ENCODE measurements at regions of chr1 and their contacts with region 1.

Region 1: GRCh38 chr1:7902478-7903085 is 38.1 kb downstream of the TNFRSF9 start:
- DNase-seq: peak in 1 of 2 donors; percentile 76
- H3K4me3 ChIP-seq: peak overlapping the region; percentile 29 to 40
- H3K27ac ChIP-seq: no peak overlapping the region
- H3K4me1 ChIP-seq: peaks cover 0 to 10% of the 10 kb centered on the region in 2 donors
- H3K27me3 ChIP-seq: no peaks in the 10 kb centered on the region
- CTCF ChIP-seq: peak; percentile 66 to 76 (median 69)

Region 2: GRCh38 chr1:7667625-7668218 is 234.9 kb before region 1 on chr1:
- intact Hi-C with region 1: loop called (anchors 1 kb)
- DNase-seq: peak; percentile 61 to 95
- H3K4me3 ChIP-seq: no peak overlapping the region
- H3K27ac ChIP-seq: no peak overlapping the region
- H3K4me1 ChIP-seq: no peaks in the 10 kb centered on the region
- H3K27me3 ChIP-seq: no peaks in the 10 kb centered on the region
- CTCF ChIP-seq: peak; percentile 99 to 100 (median 100)

Region 3: DNA sequence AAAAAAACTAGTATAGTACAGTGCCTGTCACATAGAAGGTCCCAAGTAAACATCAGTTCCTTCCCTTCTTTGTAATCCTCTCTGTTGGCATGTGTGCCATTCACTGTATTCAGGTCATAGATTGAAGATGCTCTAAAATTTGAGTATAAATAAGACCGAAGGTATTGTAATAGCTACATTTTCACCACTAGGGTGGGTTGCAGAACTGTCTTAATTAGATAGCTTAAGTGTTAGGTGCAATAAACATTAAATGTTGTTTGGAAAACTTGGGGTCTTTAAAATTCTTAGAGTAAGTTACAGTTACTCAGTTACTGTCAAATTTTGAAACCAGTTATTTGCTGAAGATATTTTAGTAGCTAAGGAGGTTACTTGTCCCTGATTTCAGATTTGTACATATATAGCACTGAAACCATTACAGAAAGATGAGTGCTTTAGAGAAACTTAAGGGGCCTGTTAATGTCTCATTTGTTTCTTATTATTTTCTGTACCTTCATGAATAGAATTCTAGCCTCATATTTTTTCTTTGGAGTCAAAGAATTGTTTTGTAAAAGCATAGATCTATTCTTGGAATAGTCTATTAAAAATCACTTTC is 94.2 kb before region 1 on chr1:
- intact Hi-C with region 1: loop called (anchors 2 kb)
- DNase-seq: no peak
- H3K4me3 ChIP-seq: no peak overlapping the region
- H3K27ac ChIP-seq: no peak overlapping the region
- H3K4me1 ChIP-seq: no peaks in the 10 kb centered on the region
- H3K27me3 ChIP-seq: no peaks in the 10 kb centered on the region
- CTCF ChIP-seq: peak; percentile 20 to 54 (median 26)

Region 4: GRCh38 chr1:7827126-7827955 is 75.2 kb before region 1 on chr1:
- intact Hi-C with region 1: loop called (anchors 5 kb)
- DNase-seq: no peak
- H3K4me3 ChIP-seq: peak overlapping the region in 1 of 2 donors; percentile 37
- H3K27ac ChIP-seq: peak overlapping the region in 1 of 2 donors; percentile 21
- H3K4me1 ChIP-seq: no peaks in the 10 kb centered on the region
- H3K27me3 ChIP-seq: no peaks in the 10 kb centered on the region
- CTCF ChIP-seq: no peak

Region 5: GRCh38 chr1:7953850-7954609 is 51.4 kb after region 1 on chr1:
- intact Hi-C with region 1: no loop called
- DNase-seq: peak; percentile 82 to 98
- H3K4me3 ChIP-seq: peak overlapping the region; percentile 73 to 76
- H3K27ac ChIP-seq: peak overlapping the region; percentile 82 to 94
- H3K4me1 ChIP-seq: peaks cover 0 to 4% of the 10 kb centered on the region in 2 donors
- H3K27me3 ChIP-seq: no peaks in the 10 kb centered on the region
- CTCF ChIP-seq: peak in 1 of 3 experiments; percentile 3

Measured in ascending aorta (tissue), 2 donors.